Breast epithelium (tissue), 4 donors: ENCODE measurements at regions of chr5 and their contacts with region 1.

Region 1: GRCh38 chr5:7837403-7837802 is 13.5 kb downstream of the CFAP90 start:
- DNase-seq: no peak
- H3K4me3 ChIP-seq: no peak overlapping the region
- H3K27ac ChIP-seq: no peak overlapping the region
- H3K4me1 ChIP-seq: no peaks in the 10 kb centered on the region
- H3K27me3 ChIP-seq: no peaks in the 10 kb centered on the region
- CTCF ChIP-seq: no peak
- POLR2A ChIP-seq: no peak

Region 2: GRCh38 chr5:7897014-7897632 is 59.7 kb after region 1 on chr5:
- intact Hi-C with region 1: loop called (anchors 2 kb)
- DNase-seq: no peak
- H3K4me3 ChIP-seq: no peak overlapping the region
- H3K27ac ChIP-seq: no peak overlapping the region
- H3K4me1 ChIP-seq: no peaks in the 10 kb centered on the region
- H3K27me3 ChIP-seq: no peaks in the 10 kb centered on the region
- CTCF ChIP-seq: no peak
- POLR2A ChIP-seq: no peak